ENCODE measurements at regions of chr4 and their contacts with region 1.

Region 1: DNA sequence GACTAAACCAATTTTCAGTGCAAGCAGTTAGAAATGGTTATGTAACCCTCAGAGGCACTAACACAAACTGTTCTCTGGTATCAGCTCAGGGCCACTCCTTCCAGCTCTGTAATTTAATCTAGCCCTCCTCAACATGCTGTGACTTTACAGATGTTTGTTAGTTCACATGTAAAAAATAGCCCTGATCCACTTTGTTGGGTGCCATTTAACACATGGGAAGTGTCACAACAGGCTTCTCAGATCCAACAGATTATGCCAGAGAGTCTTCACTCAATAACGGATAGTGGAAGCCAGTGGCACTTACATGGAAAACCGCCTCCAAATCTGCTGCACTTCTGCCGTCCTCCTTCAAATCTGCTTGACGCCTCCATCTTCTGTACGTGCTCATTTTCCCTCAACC is 51.6 kb downstream of the ATP8A1 start:
- DNase-seq: no peak
- ATAC-seq: peak; percentile 91

Region 2: DNA sequence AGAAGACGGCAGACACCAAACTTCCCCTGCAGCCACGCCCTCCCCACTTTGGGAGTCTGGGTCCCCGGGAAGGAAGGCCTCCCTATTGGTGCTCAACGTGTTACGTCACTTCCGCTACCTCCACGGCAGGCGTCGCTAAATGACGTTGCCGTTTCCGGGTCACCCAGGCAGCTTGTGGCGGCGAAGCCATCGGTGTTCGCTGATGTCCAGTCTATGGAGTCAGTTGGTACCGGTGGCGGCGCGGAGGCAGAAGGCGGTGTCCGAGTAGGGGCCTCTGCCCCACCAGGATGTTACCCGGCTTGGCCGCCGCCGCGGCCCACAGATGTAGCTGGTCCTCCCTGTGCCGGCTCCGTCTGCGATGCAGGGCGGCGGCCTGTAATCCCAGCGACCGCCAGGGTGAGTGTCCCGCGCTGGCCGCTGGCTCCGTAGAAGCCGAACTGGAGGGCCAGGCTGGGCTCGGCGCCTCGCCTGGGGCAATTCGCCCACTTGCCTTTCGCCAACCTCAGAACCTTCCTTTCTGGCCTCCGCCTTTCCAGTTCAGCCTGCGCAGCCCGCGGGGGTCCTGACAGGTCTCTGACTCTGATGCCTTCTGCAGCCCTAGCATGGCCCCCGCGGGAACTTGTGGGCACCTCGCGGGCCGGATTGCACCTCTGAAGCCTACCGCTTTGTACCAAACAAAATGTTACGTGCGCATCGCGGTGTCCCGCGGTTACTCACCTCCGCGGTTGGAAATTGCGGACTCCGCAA is 614.7 kb before region 1 on chr4 and contains the start of gene SLC30A9:
- intact Hi-C with region 1: no loop called
- DNase-seq: peak; percentile 97
- ATAC-seq: peak; percentile 99
- total RNA-seq, gene SLC30A9: 74.8 TPM

Region 3: DNA sequence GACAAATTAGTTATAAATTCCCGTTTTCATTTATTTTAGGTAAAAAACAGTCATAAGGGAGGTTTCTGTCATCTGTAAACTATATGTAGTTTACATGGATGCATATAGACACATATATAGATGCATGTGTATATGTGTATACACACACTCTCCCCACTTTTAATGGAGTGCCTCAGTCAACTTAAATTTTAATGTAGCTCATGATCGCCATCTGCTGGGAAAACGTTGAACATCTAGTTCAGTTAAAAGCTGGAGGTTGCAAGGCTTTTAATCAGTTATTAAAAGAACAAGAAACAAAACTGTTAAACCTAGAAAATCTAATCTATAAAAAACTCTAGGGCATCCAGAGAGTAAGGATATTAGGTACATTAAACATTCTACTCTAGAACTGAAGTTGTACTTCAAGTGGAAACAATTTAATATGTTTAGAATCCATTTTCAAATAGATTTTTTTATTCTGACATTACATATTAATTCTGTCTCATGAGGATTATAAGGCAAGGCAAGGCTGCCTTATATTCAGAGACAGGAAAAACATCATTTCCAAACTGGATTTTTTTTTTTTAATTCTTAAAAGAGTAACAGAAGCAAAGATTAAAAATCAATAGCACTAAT is 85.4 kb before region 1 on chr4:
- intact Hi-C with region 1: no loop called
- DNase-seq: no peak
- ATAC-seq: no peak

Region 4: DNA sequence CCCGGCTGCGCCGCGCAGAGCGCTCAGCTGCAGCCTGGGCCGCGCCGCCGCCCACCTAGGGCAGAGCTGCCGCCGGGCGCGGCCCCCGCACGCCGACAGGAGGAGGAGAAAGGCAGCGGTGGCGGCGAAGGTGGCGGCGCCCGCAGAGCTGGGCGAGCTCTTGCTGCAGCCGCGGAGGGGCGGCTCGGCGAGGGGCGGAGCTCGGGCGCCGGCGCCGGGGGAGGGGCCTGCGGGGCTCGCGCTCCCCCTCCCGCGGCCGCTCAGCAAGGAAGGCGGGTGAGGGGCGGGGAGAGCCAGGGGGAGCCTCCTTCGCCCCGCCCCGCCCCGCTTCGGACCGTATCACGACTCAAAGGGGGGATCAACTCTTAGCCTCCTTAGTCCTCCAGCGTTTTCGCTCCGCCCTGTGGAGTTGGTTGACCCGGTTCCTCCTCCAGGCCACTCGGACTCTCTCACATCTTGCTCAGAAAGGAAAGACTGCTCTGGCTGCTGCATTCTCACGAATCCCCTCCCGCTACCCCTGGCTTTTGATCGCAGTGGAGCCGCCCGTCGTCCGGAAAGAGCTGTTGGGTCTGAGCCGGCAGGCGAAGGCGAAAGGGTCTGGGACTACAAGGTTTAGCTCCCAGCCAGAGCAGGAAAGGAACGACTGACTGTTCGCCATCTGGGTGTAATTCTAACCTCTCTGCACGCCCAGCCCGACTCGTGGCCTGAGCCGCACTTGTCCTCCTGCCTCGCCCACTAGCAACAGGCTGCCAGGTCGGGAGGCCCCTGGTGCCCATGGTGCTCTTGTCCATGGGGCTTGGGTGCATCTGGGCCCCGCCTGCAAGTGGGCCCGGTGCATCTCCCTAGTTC is 51.9 kb after region 1 on chr4 and contains the start of gene ATP8A1:
- intact Hi-C with region 1: loop called (anchors 5 kb)
- DNase-seq: peak; percentile 97
- ATAC-seq: peak; percentile 98
- total RNA-seq, gene ATP8A1: 14.6 TPM

Measured in Right ventricle myocardium inferior (tissue), 1 donor.